Activated T-helper 1 cell treated with anti-CD3 and anti-CD28 coated beads, Interleukin-12 subunit alpha, Interleukin-12 subunit beta, Interleukin-2, Interleukin-4 antibody, amounts not matched to agents 30 ng/mL and 10 ng/mL and 1 ng/mL, durations not matched to agents 14 hours and 24 hours and 36 hours (primary cell): ENCODE measurements at regions of chrX and their contacts with region 1.

Region 1: GRCh38 chrX:13074297-13075262 is 30.2 kb upstream of the FAM9C start:
- DNase-seq: no peak
- H3K4me3 Mint-ChIP-seq: peak overlapping the region; percentile 54
- H3K27ac Mint-ChIP-seq: peak overlapping the region; percentile 92
- H3K4me1 Mint-ChIP-seq: peaks cover 47% of the 10 kb centered on the region
- H3K27me3 Mint-ChIP-seq: no peaks in the 10 kb centered on the region

Region 2: GRCh38 chrX:11437642-11438379 is 1636.8 kb before region 1 on chrX:
- intact Hi-C with region 1: no loop called
- DNase-seq: no peak
- H3K4me3 Mint-ChIP-seq: no peak overlapping the region
- H3K27ac Mint-ChIP-seq: no peak overlapping the region
- H3K4me1 Mint-ChIP-seq: no peaks in the 10 kb centered on the region
- H3K27me3 Mint-ChIP-seq: no peaks in the 10 kb centered on the region

Region 3: DNA sequence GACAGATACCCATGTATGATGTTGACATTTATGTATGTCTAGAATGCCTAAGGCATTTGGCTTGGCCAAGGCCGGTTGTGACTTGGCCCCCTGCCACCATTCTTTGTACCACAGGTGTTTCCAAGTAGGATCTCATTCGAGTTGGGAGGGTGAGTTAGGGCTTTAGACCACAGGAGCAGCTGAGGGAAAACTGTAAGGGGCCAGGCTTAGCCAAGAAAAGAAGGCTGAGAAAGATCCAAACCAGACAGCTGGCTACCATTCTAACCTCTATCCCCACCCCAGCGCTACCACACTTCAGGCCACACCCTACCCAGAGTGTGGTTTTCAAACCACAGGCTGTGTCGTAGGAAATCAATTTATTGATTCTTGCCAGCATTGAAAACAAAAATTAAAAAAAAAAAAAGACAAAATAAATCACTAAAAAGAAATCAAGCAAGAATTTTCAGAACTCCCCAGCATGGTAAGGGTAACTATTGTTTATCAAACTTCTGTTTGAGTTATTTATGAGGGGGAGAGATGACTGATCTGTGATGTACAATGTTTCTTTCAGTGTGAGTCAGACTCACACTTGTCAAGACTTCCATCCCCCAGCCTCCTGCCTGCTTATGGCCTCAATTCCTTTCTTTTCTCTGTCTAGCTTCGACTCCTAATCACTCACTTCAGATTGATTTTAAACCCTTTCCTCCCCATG is 89.8 kb before region 1 on chrX:
- intact Hi-C with region 1: loop called (anchors 1 kb)
- DNase-seq: peak; percentile 59
- H3K4me3 Mint-ChIP-seq: peak overlapping the region; percentile 45
- H3K27ac Mint-ChIP-seq: peak overlapping the region; percentile 93
- H3K4me1 Mint-ChIP-seq: peaks cover 65% of the 10 kb centered on the region
- H3K27me3 Mint-ChIP-seq: no peaks in the 10 kb centered on the region

Region 4: GRCh38 chrX:12999422-12999821 is 75.2 kb before region 1 on chrX:
- intact Hi-C with region 1: loop called (anchors 1 kb)
- DNase-seq: peak; percentile 51
- H3K4me3 Mint-ChIP-seq: peak overlapping the region; percentile 63
- H3K27ac Mint-ChIP-seq: peak overlapping the region; percentile 98
- H3K4me1 Mint-ChIP-seq: peaks cover 59% of the 10 kb centered on the region
- H3K27me3 Mint-ChIP-seq: no peaks in the 10 kb centered on the region

Region 5: GRCh38 chrX:13005661-13006473 is 68.7 kb before region 1 on chrX:
- intact Hi-C with region 1: loop called (anchors 1 kb)
- DNase-seq: no peak
- H3K4me3 Mint-ChIP-seq: peak overlapping the region; percentile 86
- H3K27ac Mint-ChIP-seq: peak overlapping the region; percentile 100
- H3K4me1 Mint-ChIP-seq: peaks cover 62% of the 10 kb centered on the region
- H3K27me3 Mint-ChIP-seq: no peaks in the 10 kb centered on the region

Region 6: GRCh38 chrX:13026877-13027652 is 47.5 kb before region 1 on chrX:
- intact Hi-C with region 1: loop called (anchors 2 kb)
- DNase-seq: no peak
- H3K4me3 Mint-ChIP-seq: peak overlapping the region; percentile 15
- H3K27ac Mint-ChIP-seq: peak overlapping the region; percentile 82
- H3K4me1 Mint-ChIP-seq: peaks cover 75% of the 10 kb centered on the region
- H3K27me3 Mint-ChIP-seq: no peaks in the 10 kb centered on the region

Region 7: DNA sequence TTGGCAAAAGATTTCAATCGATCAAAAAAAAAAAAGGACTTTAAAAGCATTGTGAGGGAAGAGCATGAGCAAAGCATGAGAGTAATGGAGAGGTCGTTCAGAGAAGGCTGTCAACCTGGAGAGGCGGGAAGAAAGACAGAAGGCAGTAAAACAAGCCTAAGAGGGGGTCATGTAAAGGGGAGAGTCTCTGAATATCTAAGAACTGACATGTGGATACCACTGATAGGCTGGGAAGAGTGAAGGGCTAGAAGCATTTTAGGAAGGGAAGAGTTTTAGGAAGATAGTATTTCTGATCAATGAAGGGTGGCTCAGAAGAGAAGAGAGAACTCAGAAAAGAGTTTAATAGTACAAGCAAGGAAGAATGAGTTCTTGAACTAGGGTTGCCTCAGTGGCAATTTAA is 37.7 kb before region 1 on chrX:
- intact Hi-C with region 1: loop called (anchors 5 kb)
- DNase-seq: no peak
- H3K4me3 Mint-ChIP-seq: no peak overlapping the region
- H3K27ac Mint-ChIP-seq: no peak overlapping the region
- H3K4me1 Mint-ChIP-seq: no peaks in the 10 kb centered on the region
- H3K27me3 Mint-ChIP-seq: no peaks in the 10 kb centered on the region

Region 8: GRCh38 chrX:13051529-13052172 is 22.9 kb before region 1 on chrX:
- intact Hi-C with region 1: loop called (anchors 1 kb)
- DNase-seq: no peak
- H3K4me3 Mint-ChIP-seq: peak overlapping the region; percentile 37
- H3K27ac Mint-ChIP-seq: peak overlapping the region; percentile 89
- H3K4me1 Mint-ChIP-seq: peaks cover 65% of the 10 kb centered on the region
- H3K27me3 Mint-ChIP-seq: peaks cover 1% of the 10 kb centered on the region